CD8-positive, alpha-beta T cell (primary cell): ENCODE measurements at regions of chr20 and their contacts with region 1.

Region 1: GRCh38 chr20:25444556-25444955 is 37.1 kb downstream of the GINS1 start:
- DNase-seq: no peak
- ATAC-seq: no peak
- H3K4me3 ChIP-seq: no peak overlapping the region
- H3K4me3 Mint-ChIP-seq: no peak overlapping the region
- H3K27ac ChIP-seq: no peak overlapping the region
- H3K27ac Mint-ChIP-seq: no peak overlapping the region
- H3K4me1 ChIP-seq: no peaks in the 10 kb centered on the region
- H3K4me1 Mint-ChIP-seq: no peaks in the 10 kb centered on the region
- H3K27me3 ChIP-seq: no peaks in the 10 kb centered on the region
- H3K27me3 Mint-ChIP-seq: no peaks in the 10 kb centered on the region
- CTCF ChIP-seq: no peak

Region 2: GRCh38 chr20:25508078-25508770 is 63.7 kb after region 1 on chr20:
- CTCF ChIA-PET with region 1: no interaction called
- POLR2A ChIA-PET with region 1: no interaction called
- intact Hi-C with region 1: loop called in 1 of 2 experiments (anchors 10 kb)
- DNase-seq: no peak
- ATAC-seq: no peak
- H3K4me3 ChIP-seq: no peak overlapping the region
- H3K4me3 Mint-ChIP-seq: no peak overlapping the region
- H3K27ac ChIP-seq: no peak overlapping the region
- H3K27ac Mint-ChIP-seq: no peak overlapping the region
- H3K4me1 ChIP-seq: no peaks in the 10 kb centered on the region
- H3K4me1 Mint-ChIP-seq: no peaks in the 10 kb centered on the region
- H3K27me3 ChIP-seq: no peaks in the 10 kb centered on the region
- H3K27me3 Mint-ChIP-seq: no peaks in the 10 kb centered on the region
- CTCF ChIP-seq: no peak

Region 3: GRCh38 chr20:25623736-25624499 is 179.4 kb after region 1 on chr20 and contains the start of gene NANP:
- CTCF ChIA-PET with region 1: no interaction called
- POLR2A ChIA-PET with region 1: no interaction called
- intact Hi-C with region 1: no loop called
- DNase-seq: peak; percentile 56 to 94 (median 78)
- ATAC-seq: peak; percentile 79
- H3K4me3 ChIP-seq: peak within 1 kb of the TSS; percentile 73 to 82
- H3K4me3 Mint-ChIP-seq: peak within 1 kb of the TSS; percentile 96
- H3K27ac ChIP-seq: peak within 1 kb of the TSS; percentile 48 to 67
- H3K27ac Mint-ChIP-seq: peak within 1 kb of the TSS; percentile 94
- H3K4me1 ChIP-seq: peaks cover 11% of the 10 kb centered on the region
- H3K4me1 Mint-ChIP-seq: peaks cover 20% of the 10 kb centered on the region
- H3K27me3 ChIP-seq: no peaks in the 10 kb centered on the region
- H3K27me3 Mint-ChIP-seq: no peaks in the 10 kb centered on the region
- CTCF ChIP-seq: no peak
- total RNA-seq, gene NANP: 2.0 to 2.2 TPM